HEK293 (cell line): ENCODE measurements at regions of chr11 and their contacts with region 1.

Region 1: GRCh38 chr11:92376146-92376599 is 151.6 kb downstream of the FAT3 start:
- H3K4me3 ChIP-seq: no peak overlapping the region
- H3K27ac ChIP-seq: no peak overlapping the region
- H3K4me1 ChIP-seq: peaks cover 11% of the 10 kb centered on the region
- CTCF ChIP-seq: no peak

Region 2: GRCh38 chr11:92224407-92225124 is 151.6 kb before region 1 on chr11 and contains the start of gene FAT3:
- CTCF ChIA-PET with region 1: interaction called, 4 read pairs
- POLR2A ChIA-PET with region 1: interaction called, 12 read pairs
- H3K4me3 ChIP-seq: peak within 1 kb of the TSS; percentile 71
- H3K27ac ChIP-seq: peak within 1 kb of the TSS; percentile 92
- H3K4me1 ChIP-seq: peaks cover 11% of the 10 kb centered on the region
- CTCF ChIP-seq: peak; percentile 62; the same call in 1 of the 2 replicates

Region 3: GRCh38 chr11:92399705-92400104 is 23.5 kb after region 1 on chr11:
- CTCF ChIA-PET with region 1: no interaction called
- POLR2A ChIA-PET with region 1: no interaction called
- H3K4me3 ChIP-seq: no peak overlapping the region
- H3K27ac ChIP-seq: no peak overlapping the region
- H3K4me1 ChIP-seq: 0 out of 2 replicates have a peak, but pooled peaks cover 2% of the 10 kb centered on the region
- CTCF ChIP-seq: no peak